HEK293 (cell line): ENCODE measurements at regions of chr6 and their contacts with region 1.

Region 1: GRCh38 chr6:53348371-53349208 is at the start of gene ELOVL5:
- H3K4me3 ChIP-seq: peak within 1 kb of the TSS; percentile 90
- H3K27ac ChIP-seq: peak within 1 kb of the TSS; percentile 86
- H3K4me1 ChIP-seq: peaks cover 6% of the 10 kb centered on the region
- CTCF ChIP-seq: peak; percentile 22; the same call in 1 of the 2 replicates

Region 2: DNA sequence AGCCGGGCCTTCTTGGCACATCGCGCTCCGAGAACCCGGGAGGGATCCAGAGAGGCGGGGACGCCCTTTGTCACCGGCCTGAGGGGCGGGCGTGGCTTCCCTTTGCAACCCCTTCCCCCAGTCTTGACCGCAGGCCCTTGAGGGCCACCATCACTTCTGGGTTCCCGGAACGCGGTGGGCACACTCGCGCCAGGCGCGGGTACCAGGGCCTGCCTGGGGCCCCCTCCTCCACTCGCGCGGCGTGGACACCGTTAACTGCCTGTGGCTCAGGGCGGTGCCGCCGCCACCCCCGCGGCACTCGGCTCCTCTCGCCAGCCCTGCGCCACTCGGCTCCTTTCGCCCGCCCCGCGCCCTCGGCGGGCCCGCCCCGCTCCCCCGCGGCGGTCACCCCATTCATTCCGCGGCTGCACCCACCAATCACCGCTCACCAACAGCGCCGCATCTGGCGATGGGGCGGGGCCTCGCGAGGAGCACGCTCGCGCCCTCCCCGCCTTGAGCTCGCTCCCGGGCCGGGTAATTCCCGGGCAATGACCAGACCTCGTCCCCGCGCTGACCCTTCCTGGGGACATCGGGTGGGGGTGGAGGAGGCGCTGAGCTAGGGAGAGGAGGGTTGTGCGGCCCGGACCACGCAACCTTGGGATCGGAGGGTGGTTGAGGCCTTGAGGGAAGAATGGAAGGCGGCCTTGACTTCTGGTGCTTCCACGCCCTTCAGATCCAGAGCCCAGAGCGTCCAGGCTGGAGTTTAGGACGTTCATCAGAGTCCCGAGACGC is 10.7 kb after region 1 on chr6:
- CTCF ChIA-PET with region 1: interaction called, 5 read pairs
- POLR2A ChIA-PET with region 1: interaction called, 30 read pairs
- H3K4me3 ChIP-seq: peak overlapping the region; percentile 58
- H3K27ac ChIP-seq: peak overlapping the region; percentile 92
- H3K4me1 ChIP-seq: peaks cover 23% of the 10 kb centered on the region
- CTCF ChIP-seq: no peak